Ovary (tissue), 10 donors: ENCODE measurements at regions of chr11 and their contacts with region 1.

Region 1: GRCh38 chr11:64284048-64284961 is at the start of gene BAD:
- DNase-seq: peak; percentile 94 to 98 (median 96)
- H3K4me3 ChIP-seq: peak within 1 kb of the TSS; percentile 82
- H3K27ac ChIP-seq: peak within 1 kb of the TSS; percentile 83 to 96
- H3K4me1 ChIP-seq: peaks cover 11% of the 10 kb centered on the region
- H3K27me3 ChIP-seq: no peaks in the 10 kb centered on the region
- CTCF ChIP-seq: no peak
- EP300 ChIP-seq: no peak
- POLR2A ChIP-seq: peak; percentile 69
- total RNA-seq, gene BAD: 54.8 to 125 (median 63.6) TPM

Region 2: DNA sequence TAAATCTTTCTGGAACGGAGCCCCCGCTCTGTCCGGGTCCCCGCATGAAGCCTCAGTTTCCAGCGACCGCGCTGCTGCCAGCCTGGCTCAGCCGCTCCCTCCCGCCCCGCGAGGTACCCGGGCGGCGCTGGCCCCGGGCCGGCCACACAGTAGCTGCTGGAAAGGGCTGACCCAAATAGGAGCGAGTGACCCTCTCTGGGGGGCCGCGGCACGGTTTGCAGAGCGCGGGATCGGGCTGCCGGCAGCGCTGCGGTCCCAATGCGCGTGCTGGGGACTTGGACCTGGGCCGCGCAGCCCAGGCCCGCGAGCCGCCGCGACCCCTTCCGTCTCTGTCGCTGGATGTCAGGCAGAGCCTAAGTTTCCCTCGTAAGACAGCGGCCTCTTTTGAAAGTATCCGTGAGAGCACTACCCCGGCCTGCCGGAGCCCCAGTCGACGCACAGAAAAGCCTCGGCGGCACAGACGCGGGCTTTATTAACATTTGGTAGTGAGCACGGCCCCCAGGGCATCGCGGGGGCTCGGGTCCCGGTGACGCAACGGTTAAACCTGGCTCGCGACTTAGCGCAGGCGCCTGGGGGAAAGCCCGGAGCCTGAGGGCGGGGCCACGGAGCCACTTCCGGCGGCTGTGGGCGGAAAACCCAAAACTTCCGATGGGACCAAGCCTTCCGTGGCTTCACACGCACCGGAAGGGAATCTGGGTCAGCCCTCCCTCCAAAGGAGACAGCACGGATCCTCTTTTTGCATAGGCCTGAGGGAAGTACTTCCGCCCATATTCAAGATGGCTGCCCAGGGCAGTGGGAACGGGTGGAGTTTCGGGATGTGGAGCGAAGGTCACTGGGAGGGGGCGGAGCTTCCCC is 14.7 kb before region 1 on chr11:
- intact Hi-C with region 1: loop called in 1 of 4 experiments (anchors 2 kb)
- DNase-seq: peak; percentile 97 to 99 (median 98)
- H3K4me3 ChIP-seq: peak overlapping the region; percentile 79
- H3K27ac ChIP-seq: peak overlapping the region; percentile 69 to 90
- H3K4me1 ChIP-seq: peaks cover 9% of the 10 kb centered on the region
- H3K27me3 ChIP-seq: no peaks in the 10 kb centered on the region
- CTCF ChIP-seq: peak in 1 of 3 donors; percentile 29
- EP300 ChIP-seq: peak; percentile 54
- POLR2A ChIP-seq: peak; percentile 15

Region 3: GRCh38 chr11:64304316-64305072 is 20.2 kb after region 1 on chr11:
- intact Hi-C with region 1: loop called in 1 of 4 experiments (anchors 2 kb)
- DNase-seq: peak; percentile 79 to 90 (median 88)
- H3K4me3 ChIP-seq: peak overlapping the region; percentile 48
- H3K27ac ChIP-seq: peak overlapping the region in 1 of 2 donors; percentile 55
- H3K4me1 ChIP-seq: peaks cover 13% of the 10 kb centered on the region
- H3K27me3 ChIP-seq: peaks cover 8% of the 10 kb centered on the region
- CTCF ChIP-seq: peak; percentile 74 to 87 (median 81)
- EP300 ChIP-seq: no peak
- POLR2A ChIP-seq: peak; percentile 5

Region 4: DNA sequence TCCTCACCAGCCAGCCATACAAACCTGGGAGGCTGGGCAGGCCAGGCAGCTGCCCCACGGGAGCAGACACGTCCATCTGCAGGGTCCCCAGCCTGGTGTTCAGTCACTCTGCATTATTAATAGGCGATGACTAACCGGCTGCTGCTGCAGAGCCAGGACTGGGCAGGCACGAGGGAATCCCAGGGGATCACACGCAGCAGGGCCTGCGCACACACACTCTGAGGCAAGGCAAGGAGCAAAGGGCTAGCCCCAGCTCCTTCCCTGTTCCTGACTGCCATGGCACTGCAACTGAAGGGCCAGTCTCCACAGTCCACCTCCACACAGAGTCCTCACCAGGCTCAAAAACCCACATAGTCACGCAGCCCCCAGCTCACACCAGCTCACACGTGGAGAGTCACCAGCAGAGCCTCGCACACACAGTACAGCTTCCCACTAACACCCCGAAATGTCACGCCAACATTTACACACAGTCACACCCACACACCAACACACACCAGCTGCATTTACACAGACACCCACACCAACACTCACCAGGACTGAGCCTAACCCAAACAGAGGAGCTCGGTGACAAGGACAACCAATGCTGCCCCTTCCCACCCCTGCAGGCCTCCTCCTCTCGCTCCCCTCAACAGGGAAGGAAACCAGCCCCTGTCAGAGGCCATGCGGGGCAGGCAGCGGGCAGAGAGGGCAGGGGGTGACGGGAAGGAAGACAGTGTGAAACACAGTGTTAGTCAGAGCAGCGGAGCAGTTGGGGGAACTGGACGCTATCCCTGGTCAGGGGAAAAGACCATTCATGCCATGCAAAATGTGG is 391.4 kb after region 1 on chr11:
- intact Hi-C with region 1: no loop called
- DNase-seq: peak in 1 of 5 donors; percentile 48
- H3K4me3 ChIP-seq: no peak overlapping the region
- H3K27ac ChIP-seq: no peak overlapping the region
- H3K4me1 ChIP-seq: no peaks in the 10 kb centered on the region
- H3K27me3 ChIP-seq: no peaks in the 10 kb centered on the region
- CTCF ChIP-seq: no peak
- EP300 ChIP-seq: no peak
- POLR2A ChIP-seq: no peak

Region 5: DNA sequence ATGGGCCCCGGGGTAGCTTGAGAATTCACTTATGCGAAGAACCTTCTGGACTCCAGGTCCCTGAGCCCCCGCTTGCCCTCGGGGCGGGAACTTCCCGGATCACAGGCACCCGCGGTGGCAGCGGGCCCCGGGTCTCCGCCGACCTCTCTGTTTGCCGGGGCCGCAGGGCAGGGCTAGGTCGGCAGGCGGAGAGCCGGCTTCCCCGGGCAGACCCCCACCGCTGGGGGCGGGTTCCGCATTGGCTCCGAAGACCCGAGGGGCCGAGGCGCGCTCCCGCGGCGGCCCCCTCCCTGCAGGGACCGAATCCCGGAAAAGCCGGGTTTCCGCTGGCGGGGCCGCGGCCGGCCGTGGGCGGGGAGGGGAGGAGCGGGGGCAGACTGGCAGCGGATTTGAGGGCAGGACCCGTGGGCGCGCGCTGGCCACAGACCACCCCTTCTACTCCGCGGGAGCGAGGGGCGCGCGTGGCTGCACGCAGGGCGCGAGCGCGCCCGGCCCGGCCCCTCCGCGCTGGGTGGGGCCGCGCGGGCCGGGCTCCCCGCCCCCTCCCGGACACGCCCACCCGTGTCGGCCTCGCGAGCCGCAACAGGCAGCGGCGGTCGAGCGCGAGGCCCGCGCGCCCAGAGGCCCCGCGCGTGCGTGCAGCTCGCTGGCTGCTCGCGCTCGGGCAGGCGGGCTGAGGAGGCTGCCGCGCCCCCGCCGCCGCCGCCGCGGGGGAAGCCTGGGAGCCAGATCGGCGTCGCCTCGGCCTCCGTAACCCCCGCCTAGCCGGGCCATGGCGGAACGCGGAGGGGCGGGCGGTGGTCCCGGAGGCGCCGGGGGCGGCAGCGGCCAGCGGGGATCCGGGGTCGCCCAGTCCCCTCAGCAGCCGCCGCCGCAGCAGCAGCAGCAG is 1785.7 kb after region 1 on chr11 and contains the start of gene PACS1:
- intact Hi-C with region 1: loop called in 1 of 4 experiments (anchors 10 kb)
- DNase-seq: peak; percentile 70 to 86 (median 81)
- H3K4me3 ChIP-seq: peak within 1 kb of the TSS; percentile 58
- H3K27ac ChIP-seq: peak within 1 kb of the TSS; percentile 85 to 86
- H3K4me1 ChIP-seq: peaks cover 12% of the 10 kb centered on the region
- H3K27me3 ChIP-seq: no peaks in the 10 kb centered on the region
- CTCF ChIP-seq: peak in 2 of 3 donors; percentile 32 to 43
- EP300 ChIP-seq: no peak
- POLR2A ChIP-seq: peak; percentile 28
- total RNA-seq, gene PACS1: 22.4 to 83.9 (median 73.9) TPM